PC-3 (cell line): ENCODE measurements at regions of chr12 and their contacts with region 1.

Region 1: DNA sequence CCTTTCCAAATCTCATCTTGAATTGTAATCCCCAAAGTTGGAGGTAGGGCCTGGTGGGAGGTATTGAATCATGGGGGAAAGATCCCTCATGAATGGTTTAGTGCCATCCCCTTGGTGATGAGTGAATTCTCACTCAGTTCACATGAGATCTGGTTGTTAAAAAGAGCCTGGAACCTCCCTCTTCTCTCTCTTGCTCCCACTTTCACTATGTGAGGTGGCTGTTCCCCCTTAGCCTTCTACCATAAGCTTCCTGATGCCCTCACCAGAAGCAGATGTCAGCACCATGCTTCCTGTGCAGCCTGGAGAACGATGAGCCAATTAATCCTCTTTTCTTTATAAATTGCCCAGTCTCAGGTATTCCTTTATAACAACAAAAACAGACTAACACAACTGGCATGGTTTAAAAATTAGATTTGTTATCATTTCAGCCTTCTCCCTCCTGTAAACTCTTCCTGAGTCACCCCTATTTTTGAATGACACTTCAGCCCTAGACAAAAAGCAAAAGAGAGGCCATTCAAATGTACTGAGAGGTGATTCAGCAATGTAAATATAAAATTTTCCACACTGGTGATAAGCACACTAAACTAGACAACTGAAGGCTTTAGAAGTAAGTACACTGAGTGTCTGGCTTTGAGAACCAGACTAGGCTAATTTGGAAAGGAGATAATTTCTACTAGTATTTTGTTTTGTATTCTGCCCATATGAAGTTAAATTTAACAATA is 212.1 kb upstream of the ABCD2 start:
- DNase-seq: peak; percentile 75
- ATAC-seq: peak; percentile 94
- H3K4me3 ChIP-seq: no peak overlapping the region
- H3K27ac ChIP-seq: no peak overlapping the region
- H3K4me1 ChIP-seq: peaks cover 18% of the 10 kb centered on the region
- H3K27me3 ChIP-seq: no peaks in the 10 kb centered on the region
- CTCF ChIP-seq: no peak

Region 2: GRCh38 chr12:39912211-39912978 is 80.6 kb after region 1 on chr12:
- CTCF ChIA-PET with region 1: no interaction called
- POLR2A ChIA-PET with region 1: no interaction called
- intact Hi-C with region 1: loop called (anchors 10 kb)
- DNase-seq: peak; percentile 79
- ATAC-seq: peak; percentile 99
- H3K4me3 ChIP-seq: no peak overlapping the region
- H3K27ac ChIP-seq: no peak overlapping the region
- H3K4me1 ChIP-seq: no peaks in the 10 kb centered on the region; the same call in 1 of the 2 replicates
- H3K27me3 ChIP-seq: no peaks in the 10 kb centered on the region
- CTCF ChIP-seq: no peak

Region 3: DNA sequence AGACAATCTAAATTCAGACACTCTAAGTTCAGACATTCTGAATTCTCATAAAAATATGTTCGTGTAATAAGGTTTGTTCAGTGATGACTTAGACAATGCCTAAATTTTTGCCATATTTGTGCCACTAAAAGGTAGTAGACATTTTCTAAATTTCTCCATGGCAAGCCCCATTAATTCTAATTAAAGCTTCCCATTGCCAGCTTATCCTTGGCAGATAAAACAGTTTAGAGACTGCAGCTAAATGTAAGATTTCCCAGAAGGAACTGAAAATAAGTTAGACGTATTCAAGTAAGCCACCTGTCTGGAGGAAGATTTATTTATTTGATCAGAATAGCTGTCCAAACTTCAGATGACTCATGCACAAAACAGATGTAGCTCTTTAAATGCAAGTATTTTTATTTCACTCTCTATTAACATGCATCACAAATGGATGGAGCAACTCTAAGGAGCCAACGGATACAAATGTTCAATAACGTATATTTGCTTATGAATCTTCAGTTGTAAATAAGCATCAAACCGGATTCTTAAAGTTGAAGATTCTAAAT is 143.7 kb after region 1 on chr12:
- CTCF ChIA-PET with region 1: no interaction called
- POLR2A ChIA-PET with region 1: no interaction called
- intact Hi-C with region 1: loop called (anchors 5 kb)
- DNase-seq: peak; percentile 21
- ATAC-seq: peak; percentile 68
- H3K4me3 ChIP-seq: no peak overlapping the region
- H3K27ac ChIP-seq: no peak overlapping the region
- H3K4me1 ChIP-seq: no peaks in the 10 kb centered on the region
- H3K27me3 ChIP-seq: no peaks in the 10 kb centered on the region
- CTCF ChIP-seq: no peak

Region 4: GRCh38 chr12:39990122-39991101 is 158.7 kb after region 1 on chr12:
- CTCF ChIA-PET with region 1: no interaction called
- POLR2A ChIA-PET with region 1: no interaction called
- intact Hi-C with region 1: loop called (anchors 1 kb)
- DNase-seq: peak; percentile 61
- ATAC-seq: peak; percentile 91
- H3K4me3 ChIP-seq: no peak overlapping the region
- H3K27ac ChIP-seq: no peak overlapping the region
- H3K4me1 ChIP-seq: no peaks in the 10 kb centered on the region
- H3K27me3 ChIP-seq: no peaks in the 10 kb centered on the region
- CTCF ChIP-seq: peak; percentile 86